ENCODE measurements at regions of chrX and their contacts with region 1.

Region 1: DNA sequence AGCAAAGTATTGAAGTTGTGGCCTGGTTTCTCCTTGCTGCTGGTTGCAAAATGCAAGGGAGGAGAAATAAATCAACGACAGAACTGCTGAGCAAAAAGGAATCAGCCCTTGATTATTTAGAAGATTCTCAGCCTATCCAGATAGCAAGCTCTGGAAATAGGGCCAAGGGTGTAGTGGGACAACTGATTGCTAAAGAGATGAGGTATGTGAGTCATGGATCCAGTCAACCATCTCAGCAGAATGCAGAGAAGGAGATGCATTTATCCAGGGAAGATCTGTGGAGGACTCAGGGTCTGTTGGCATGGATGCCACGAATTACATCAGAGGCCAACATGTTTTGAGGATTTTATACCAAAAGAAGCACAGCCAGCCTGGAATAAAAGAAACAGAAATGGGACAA is 36.7 kb downstream of the FOXR2 start:
- DNase-seq: no peak
- ATAC-seq: no peak
- H3K4me3 ChIP-seq: no peak overlapping the region
- H3K27ac ChIP-seq: no peak overlapping the region
- H3K4me1 ChIP-seq: no peaks in the 10 kb centered on the region
- H3K27me3 ChIP-seq: no peaks in the 10 kb centered on the region
- CTCF ChIP-seq: no peak
- POLR2A ChIP-seq: no peak

Region 2: DNA sequence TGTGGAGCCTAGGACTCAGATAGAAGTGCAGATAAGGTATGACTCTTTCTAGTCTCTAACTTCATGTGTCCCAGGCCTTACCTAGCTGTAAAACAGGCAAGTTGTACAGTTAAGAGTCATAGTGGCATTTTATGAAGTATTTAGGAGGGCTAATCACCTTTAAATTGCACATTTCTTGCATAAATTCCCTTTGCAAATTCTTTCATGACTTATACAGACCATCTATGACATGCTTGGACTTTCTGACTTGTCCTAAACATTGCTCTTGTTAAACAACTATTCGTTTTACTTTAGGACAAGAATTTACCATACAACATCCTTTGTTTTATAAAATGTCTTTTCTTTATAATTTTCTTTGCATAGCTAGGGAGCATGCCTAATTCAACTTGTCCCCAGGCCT is 49.8 kb after region 1 on chrX:
- intact Hi-C with region 1: loop called in 1 of 10 experiments (anchors 5 kb)
- DNase-seq: no peak
- ATAC-seq: no peak
- H3K4me3 ChIP-seq: no peak overlapping the region
- H3K27ac ChIP-seq: no peak overlapping the region
- H3K4me1 ChIP-seq: no peaks in the 10 kb centered on the region
- H3K27me3 ChIP-seq: no peaks in the 10 kb centered on the region
- CTCF ChIP-seq: no peak
- POLR2A ChIP-seq: no peak